ENCODE measurements at regions of chr1 and their contacts with region 1.

Region 1: GRCh38 chr1:108125312-108126138 is 74.6 kb downstream of the SLC25A24 start:
- DNase-seq: peak; percentile 31 to 68
- ATAC-seq: peak; percentile 91 to 93
- H3K4me3 ChIP-seq: no peak overlapping the region
- H3K27ac ChIP-seq: no peak overlapping the region
- H3K4me1 ChIP-seq: no peaks in the 10 kb centered on the region
- CTCF ChIP-seq: peak; percentile 76
- EP300 ChIP-seq: no peak
- POLR2A ChIP-seq: no peak
- RAD21 ChIP-seq: peak; percentile 73 to 79

Region 2: GRCh38 chr1:107776900-107777663 is 348.4 kb before region 1 on chr1:
- CTCF ChIA-PET with region 1: interaction called, 202 read pairs
- POLR2A ChIA-PET with region 1: interaction called, 3 read pairs
- DNase-seq: no peak
- ATAC-seq: no peak
- H3K4me3 ChIP-seq: no peak overlapping the region
- H3K27ac ChIP-seq: no peak overlapping the region
- H3K4me1 ChIP-seq: no peaks in the 10 kb centered on the region
- CTCF ChIP-seq: no peak
- EP300 ChIP-seq: no peak
- POLR2A ChIP-seq: no peak
- RAD21 ChIP-seq: no peak

Region 3: DNA sequence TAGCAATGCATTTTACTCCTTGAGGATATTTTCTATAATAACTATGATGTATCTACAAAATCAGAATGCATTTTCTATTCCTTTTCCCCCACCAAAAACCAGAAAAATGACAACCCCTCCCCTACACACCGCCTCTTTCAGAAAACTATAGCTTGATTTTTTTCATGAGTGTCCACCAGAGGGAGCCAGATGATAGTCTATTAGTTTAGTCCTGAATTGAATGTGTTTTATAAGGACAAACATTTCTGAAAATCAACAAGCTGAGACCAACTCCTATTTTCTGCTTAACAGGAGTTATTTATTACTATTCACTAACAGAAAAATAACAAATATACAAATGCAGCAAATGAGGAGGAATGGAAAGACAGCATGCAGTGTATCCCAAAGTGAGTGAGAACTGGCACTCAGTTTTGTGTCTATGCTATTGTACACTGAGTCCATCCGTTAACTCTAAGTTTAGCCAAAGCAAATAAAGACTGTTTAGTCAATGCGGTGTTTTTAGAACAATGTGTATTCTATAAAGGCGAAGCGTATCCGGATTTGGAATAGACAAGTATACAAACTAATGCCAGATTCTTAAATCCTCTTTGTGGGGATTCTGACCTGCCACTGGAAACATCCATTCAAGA is 343.2 kb before region 1 on chr1:
- CTCF ChIA-PET with region 1: interaction called, 202 read pairs
- POLR2A ChIA-PET with region 1: interaction called, 3 read pairs
- DNase-seq: peak; percentile 2 to 34
- ATAC-seq: peak in 1 of 2 experiments; percentile 68; a peak in 3 of 6 replicates
- H3K4me3 ChIP-seq: no peak overlapping the region
- H3K27ac ChIP-seq: no peak overlapping the region
- H3K4me1 ChIP-seq: no peaks in the 10 kb centered on the region
- CTCF ChIP-seq: peak; percentile 67
- EP300 ChIP-seq: no peak
- POLR2A ChIP-seq: no peak
- RAD21 ChIP-seq: peak; percentile 75 to 77